ENCODE measurements at regions of chr21 and their contacts with region 1.

Region 1: DNA sequence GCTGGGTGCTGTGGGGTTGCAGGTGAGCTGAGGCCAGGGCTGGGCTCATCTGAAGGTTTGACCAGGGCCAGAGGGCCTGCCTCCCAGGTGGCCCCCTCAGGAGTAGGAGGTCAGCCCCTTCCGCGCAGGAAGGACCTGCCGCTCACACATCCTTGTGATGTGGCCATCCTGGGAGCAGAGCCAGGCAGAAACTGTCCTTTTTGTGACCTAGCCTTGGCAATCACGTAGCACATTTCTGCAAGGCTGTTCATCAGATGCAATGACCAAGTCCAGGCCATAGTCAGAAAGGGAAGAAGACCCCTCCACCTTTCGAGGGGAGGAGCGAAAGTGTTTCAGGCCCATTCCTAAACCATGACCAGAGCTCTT is 55.5 kb upstream of the TRAPPC10 start:
- DNase-seq: peak in 2 of 5 donors; percentile 46 to 69
- ATAC-seq: peak; percentile 24 to 52 (median 38)
- H3K4me3 ChIP-seq: no peak overlapping the region
- H3K27ac ChIP-seq: peak overlapping the region in 2 of 12 donors; percentile 15 to 60
- H3K4me1 ChIP-seq: peaks cover 0 to 46% (median 15%) of the 10 kb centered on the region in 12 donors
- H3K27me3 ChIP-seq: no peaks in the 10 kb centered on the region
- CTCF ChIP-seq: no peak
- POLR2A ChIP-seq: no peak

Region 2: DNA sequence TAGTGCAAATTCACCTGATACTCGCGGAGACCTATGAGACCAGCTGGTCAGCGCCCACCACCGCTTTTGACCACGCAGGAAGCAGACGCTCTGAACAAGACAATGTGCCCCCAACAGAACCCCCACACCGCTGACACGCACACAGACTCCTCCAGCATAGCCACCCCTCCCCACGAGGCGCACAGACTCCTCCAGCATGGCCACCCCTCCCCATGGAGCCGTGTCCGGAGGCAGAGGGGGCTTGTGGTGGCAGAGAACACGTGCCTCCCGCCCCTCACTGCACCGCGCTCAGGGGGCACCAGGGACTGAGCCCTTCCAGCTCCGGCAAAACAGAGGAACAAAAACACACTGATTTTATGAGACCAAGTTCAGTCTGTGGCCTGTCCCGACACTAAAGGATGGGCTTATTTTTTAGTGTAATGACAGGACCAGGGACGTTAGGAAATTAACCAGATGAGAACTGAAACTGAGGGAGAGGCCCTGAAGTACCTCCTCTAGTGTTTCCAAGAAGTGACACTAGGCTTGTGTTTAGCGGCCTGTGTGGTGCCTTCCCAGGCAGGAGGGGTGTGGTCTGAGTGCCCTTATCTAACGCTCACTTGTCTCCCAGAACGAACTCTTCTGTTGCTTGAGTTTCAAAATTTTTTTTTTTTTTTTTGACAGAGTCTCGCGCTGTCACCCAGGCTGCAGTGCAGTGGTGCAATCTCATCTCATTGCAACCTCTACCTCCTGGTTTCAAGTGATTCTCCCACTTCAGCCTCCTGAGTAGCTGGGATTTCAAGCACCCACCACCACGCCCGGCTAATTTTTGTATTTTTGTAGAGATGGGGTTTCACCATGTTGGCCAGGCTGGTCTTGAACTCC is 101.7 kb before region 1 on chr21:
- intact Hi-C with region 1: loop called in 1 of 10 experiments (anchors 10 kb)
- DNase-seq: peak in 2 of 5 donors; percentile 23 to 32
- ATAC-seq: peak; percentile 13 to 49 (median 32)
- H3K4me3 ChIP-seq: no peak overlapping the region
- H3K27ac ChIP-seq: peak overlapping the region in 1 of 12 donors; percentile 29
- H3K4me1 ChIP-seq: peaks cover 0 to 5% (median under 1%) of the 10 kb centered on the region in 12 donors
- H3K27me3 ChIP-seq: no peaks in the 10 kb centered on the region
- CTCF ChIP-seq: no peak
- POLR2A ChIP-seq: no peak

Region 3: DNA sequence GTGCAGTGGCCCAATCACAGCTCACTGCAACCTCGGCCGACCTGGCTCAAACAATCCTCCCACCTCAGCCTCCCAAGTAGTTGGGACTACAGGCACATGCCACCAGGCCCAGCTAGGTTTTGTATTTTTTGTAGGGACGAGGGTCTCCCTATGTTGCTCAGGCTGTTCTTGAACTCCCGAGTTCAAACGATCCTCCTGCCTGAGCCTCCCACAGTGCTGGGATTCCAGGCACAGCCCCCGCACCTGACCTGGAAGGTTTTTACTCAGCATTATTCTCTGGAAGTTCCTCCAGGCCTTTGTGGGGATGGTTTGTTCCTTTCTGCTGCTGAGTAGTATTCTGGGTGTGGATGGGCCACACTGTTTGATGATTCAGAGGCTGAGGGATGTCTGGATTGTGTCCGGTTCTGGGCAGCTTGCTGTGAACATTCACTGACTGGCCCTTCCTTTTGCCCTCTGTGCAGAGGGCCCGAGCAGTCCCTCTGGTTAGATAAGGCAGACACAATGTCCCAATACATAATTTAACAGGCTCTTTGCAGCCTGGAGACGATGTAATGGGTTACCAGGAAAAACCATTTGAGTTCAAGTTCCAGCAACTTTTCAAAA is 49.5 kb after region 1 on chr21:
- intact Hi-C with region 1: no loop called
- DNase-seq: peak in 3 of 5 donors; percentile 40 to 70 (median 59)
- ATAC-seq: peak; percentile 65 to 95 (median 90)
- H3K4me3 ChIP-seq: no peak overlapping the region
- H3K27ac ChIP-seq: peak overlapping the region in 11 of 12 donors; percentile 35 to 88 (median 72)
- H3K4me1 ChIP-seq: peaks cover 0 to 18% (median under 1%) of the 10 kb centered on the region in 12 donors
- H3K27me3 ChIP-seq: no peaks in the 10 kb centered on the region
- CTCF ChIP-seq: no peak
- POLR2A ChIP-seq: no peak

Measured in heart left ventricle (tissue), 16 donors.